Left ventricle myocardium superior (tissue), 1 donor: ENCODE measurements at regions of chr18 and their contacts with region 1.

Region 1: GRCh38 chr18:48022531-48023329 is 92.3 kb upstream of the SMAD2 start:
- DNase-seq: no peak
- ATAC-seq: peak; percentile 76

Region 2: GRCh38 chr18:47067648-47068047 is 955.1 kb before region 1 on chr18:
- intact Hi-C with region 1: no loop called
- DNase-seq: no peak
- ATAC-seq: no peak

Region 3: GRCh38 chr18:47772374-47773248 is 250.1 kb before region 1 on chr18:
- intact Hi-C with region 1: loop called (anchors 5 kb)
- DNase-seq: peak; percentile 68
- ATAC-seq: peak; percentile 69

Region 4: DNA sequence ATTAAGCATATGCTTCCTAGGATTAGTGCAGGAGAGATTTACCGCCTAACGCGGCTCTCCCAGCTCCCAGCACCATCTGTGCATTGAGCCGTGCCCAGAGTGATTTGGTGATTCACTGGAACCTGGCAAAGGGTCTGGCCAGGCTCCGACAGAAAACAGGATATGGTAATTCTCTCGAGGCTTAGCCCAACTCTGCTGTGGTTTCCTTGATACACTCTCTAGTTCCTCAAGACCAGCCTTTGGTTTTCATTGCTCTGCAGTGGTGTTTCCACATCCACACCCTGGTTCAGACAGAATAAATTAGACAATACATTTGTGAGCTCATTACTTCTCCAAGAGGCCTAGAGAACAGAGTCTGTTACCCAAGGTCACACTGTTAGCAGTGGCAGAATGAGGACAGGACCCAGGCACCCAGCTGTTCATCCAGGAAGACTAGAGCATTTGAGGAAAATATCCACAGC is 69.2 kb before region 1 on chr18:
- intact Hi-C with region 1: no loop called
- DNase-seq: no peak
- ATAC-seq: peak; percentile 68

Region 5: DNA sequence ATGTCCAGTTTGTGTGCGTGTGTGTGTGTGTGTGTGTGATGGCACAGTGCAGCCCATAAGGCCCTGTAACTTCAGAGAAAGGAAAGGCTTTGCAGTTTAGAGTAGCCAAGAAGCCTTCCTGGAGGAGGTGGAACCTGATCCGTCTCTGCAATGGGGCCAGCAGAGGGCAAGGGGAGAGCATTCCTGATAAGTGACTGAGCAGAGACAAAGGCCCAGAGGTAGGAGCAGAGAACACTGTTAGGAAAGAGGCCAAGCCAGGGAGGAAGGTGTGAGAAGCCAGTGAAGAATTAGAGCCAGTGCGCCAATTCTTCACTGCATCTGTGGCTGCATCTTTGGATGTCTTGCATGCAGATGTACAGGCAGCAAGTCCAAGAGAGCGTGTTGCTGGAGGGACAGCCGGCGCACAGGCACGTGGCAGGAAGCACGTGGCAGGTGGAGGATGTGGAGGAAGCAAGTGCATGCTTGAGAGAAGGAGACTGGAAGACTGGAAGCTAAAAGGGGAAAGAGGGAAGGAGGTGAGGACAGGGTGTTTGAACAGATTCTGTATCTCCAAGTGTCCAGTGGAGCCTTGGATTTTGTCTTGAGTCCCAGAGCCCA is 712.4 kb after region 1 on chr18:
- intact Hi-C with region 1: no loop called
- DNase-seq: no peak
- ATAC-seq: peak; percentile 27